Cardiac septum (tissue), 1 donor: ENCODE measurements at regions of chr3 and their contacts with region 1.

Region 1: DNA sequence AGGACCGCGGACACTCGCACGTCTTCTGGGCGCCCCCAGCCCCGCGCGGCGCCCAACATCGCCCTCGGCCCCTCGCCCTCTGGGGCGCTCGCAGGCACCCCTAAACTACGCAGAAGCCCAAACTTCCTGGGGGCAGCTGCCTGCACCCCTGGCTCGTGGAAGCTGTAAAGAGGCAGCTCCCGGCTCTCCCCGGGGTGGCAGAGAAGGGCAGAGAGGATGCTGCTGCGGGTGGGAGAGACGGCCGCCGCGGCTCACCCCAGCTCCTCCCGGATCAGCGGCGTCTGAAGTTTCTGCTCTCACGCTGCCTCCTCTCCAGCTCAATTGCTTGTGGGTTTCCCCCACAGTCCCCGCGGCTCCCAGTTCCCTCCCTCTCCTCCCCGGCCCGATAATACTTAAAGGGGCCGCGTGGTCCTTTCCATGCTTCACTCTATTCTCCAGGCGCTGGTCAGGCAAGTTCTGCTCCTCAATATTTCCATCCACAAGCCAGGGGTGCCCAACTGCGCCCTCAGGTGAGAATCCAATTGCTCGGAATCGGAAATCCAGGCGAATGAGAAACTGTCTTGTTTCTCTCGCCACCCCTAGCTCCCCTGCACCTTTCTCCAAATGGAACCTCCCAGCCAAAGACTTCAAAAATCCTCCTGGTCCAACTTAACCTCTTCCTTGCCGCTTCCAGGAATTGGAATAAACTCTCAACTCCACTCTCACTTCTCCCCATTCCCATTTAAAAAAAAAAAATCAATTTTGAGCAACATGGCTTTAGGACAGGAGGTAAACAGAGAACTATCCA is 748.5 kb downstream of the ROBO1 start:
- DNase-seq: peak; percentile 81

Region 2: DNA sequence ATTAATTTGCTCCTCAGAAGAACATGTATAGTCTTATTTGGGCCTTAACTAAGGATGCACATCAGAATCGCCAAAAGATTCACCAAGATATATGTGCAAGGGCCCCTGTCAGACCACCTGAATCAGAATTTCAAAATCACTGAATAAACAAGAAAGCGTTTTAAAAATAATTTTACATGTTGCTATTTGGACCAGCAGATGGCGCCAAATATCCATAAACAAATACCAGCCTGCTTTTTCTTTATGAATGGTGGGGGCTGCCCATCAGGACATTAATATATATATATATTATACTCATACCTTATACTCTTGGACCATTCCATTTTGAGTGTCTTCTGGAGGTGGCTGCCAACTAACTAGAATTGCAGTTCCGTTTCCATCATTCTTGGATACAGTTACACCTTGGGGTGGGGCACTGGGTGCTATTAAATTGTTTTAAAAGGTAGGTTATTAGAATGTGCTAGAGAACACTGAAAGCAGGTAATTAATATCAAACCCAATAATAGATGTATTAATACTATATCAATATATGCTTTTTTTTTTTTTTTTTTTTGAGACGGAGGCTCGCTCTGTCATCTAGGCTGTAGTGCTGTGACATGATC is 359.8 kb before region 1 on chr3:
- intact Hi-C with region 1: loop called (anchors 5 kb)
- DNase-seq: no peak

Region 3: DNA sequence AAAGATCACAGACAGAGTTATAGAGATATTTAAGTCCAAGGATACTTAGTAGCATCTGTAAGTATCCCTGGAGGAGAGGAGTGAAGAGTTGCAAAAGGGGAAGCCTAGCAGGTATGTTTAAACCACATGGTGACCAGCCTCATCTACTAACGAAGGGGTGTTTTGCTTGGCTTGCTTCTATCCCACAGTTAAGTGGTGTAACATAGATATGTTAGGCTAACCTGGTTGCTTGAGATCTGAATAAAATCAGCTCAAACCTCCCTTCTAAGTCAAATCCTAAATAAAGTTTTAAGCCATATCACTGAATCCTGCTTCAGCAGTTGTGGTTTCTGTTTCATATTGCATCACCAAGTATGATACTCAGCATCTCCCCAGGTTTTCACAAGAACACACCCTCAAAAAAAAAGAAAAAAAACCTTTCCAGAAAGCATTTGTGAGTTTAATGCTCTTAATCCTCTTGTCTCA is 131.8 kb before region 1 on chr3:
- intact Hi-C with region 1: loop called (anchors 10 kb)
- DNase-seq: no peak